ENCODE measurements at regions of chr2 and their contacts with region 1.

Region 1: GRCh38 chr2:176969642-176970359 is 242.8 kb upstream of the HNRNPA3 start:
- DNase-seq: no peak
- H3K4me3 Mint-ChIP-seq: no peak overlapping the region
- H3K27ac Mint-ChIP-seq: no peak overlapping the region
- H3K4me1 Mint-ChIP-seq: no peaks in the 10 kb centered on the region
- H3K27me3 Mint-ChIP-seq: peaks cover 97% of the 10 kb centered on the region
- CTCF ChIP-seq: no peak

Region 2: GRCh38 chr2:177118636-177119035 is 148.8 kb after region 1 on chr2:
- CTCF ChIA-PET with region 1: no interaction called
- POLR2A ChIA-PET with region 1: no interaction called
- intact Hi-C with region 1: no loop called
- DNase-seq: no peak
- H3K4me3 Mint-ChIP-seq: no peak overlapping the region
- H3K27ac Mint-ChIP-seq: no peak overlapping the region
- H3K4me1 Mint-ChIP-seq: peaks cover 6% of the 10 kb centered on the region
- H3K27me3 Mint-ChIP-seq: peaks cover 86% of the 10 kb centered on the region
- CTCF ChIP-seq: no peak

Region 3: GRCh38 chr2:177143444-177143843 is 173.6 kb after region 1 on chr2:
- CTCF ChIA-PET with region 1: no interaction called
- POLR2A ChIA-PET with region 1: no interaction called
- intact Hi-C with region 1: loop called (anchors 5 kb)
- DNase-seq: peak; percentile 58
- H3K4me3 Mint-ChIP-seq: no peak overlapping the region
- H3K27ac Mint-ChIP-seq: no peak overlapping the region
- H3K4me1 Mint-ChIP-seq: peaks cover 7% of the 10 kb centered on the region
- H3K27me3 Mint-ChIP-seq: peaks cover 43% of the 10 kb centered on the region
- CTCF ChIP-seq: no peak

Measured in MCF 10A (cell line).